ENCODE measurements at regions of chr1 and their contacts with region 1.

Region 1: GRCh38 chr1:19485362-19486187 is at the start of gene CAPZB:
- DNase-seq: peak; percentile 97
- H3K4me3 Mint-ChIP-seq: peak within 1 kb of the TSS; percentile 97
- H3K27ac Mint-ChIP-seq: peak within 1 kb of the TSS; percentile 95
- H3K4me1 Mint-ChIP-seq: peaks cover 52% of the 10 kb centered on the region
- H3K27me3 Mint-ChIP-seq: no peaks in the 10 kb centered on the region
- total RNA-seq, gene CAPZB: 291 and 297 TPM in 2 replicates

Region 2: DNA sequence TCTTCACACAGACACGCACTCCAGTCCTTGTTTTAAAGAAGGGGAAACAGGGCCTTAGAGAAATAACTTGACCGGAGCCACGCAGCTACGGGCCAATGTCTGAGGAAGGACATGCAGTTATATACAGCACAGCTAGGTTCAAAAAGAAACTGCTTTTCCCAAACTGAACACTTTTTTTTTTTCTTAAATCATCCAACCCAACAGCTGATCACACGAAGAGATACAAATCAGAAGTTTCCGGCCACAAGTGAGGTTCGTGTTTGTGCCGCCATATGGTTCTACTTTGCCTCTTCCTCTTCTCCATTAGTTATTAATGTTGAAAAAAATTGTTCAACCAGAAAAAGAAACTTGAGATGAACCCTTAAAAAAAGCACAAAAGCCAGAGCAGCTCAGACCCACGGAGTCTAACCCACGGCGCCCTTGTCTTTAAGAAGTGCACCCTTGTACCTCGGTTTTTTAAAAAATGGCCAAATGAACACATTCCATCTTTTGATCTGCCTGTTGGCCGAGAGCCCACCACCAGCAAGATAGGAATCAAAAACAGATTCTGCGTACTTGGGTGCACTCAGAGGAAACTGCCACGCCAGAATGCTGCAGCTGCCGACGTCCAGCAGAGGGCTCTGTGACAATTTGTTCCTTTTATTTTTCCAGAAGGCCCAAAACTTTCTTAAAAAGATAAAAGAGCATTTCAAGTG is 94.5 kb before region 1 on chr1:
- intact Hi-C with region 1: loop called (anchors 2 kb)
- DNase-seq: peak; percentile 88
- H3K4me3 Mint-ChIP-seq: peak overlapping the region; percentile 81
- H3K27ac Mint-ChIP-seq: peak overlapping the region; percentile 94
- H3K4me1 Mint-ChIP-seq: peaks cover 49% of the 10 kb centered on the region
- H3K27me3 Mint-ChIP-seq: no peaks in the 10 kb centered on the region

Region 3: GRCh38 chr1:19468397-19468956 is 17.1 kb before region 1 on chr1:
- intact Hi-C with region 1: loop called (anchors 1 kb)
- DNase-seq: peak; percentile 90
- H3K4me3 Mint-ChIP-seq: peak overlapping the region; percentile 78
- H3K27ac Mint-ChIP-seq: peak overlapping the region; percentile 92
- H3K4me1 Mint-ChIP-seq: peaks cover 82% of the 10 kb centered on the region
- H3K27me3 Mint-ChIP-seq: no peaks in the 10 kb centered on the region

Region 4: DNA sequence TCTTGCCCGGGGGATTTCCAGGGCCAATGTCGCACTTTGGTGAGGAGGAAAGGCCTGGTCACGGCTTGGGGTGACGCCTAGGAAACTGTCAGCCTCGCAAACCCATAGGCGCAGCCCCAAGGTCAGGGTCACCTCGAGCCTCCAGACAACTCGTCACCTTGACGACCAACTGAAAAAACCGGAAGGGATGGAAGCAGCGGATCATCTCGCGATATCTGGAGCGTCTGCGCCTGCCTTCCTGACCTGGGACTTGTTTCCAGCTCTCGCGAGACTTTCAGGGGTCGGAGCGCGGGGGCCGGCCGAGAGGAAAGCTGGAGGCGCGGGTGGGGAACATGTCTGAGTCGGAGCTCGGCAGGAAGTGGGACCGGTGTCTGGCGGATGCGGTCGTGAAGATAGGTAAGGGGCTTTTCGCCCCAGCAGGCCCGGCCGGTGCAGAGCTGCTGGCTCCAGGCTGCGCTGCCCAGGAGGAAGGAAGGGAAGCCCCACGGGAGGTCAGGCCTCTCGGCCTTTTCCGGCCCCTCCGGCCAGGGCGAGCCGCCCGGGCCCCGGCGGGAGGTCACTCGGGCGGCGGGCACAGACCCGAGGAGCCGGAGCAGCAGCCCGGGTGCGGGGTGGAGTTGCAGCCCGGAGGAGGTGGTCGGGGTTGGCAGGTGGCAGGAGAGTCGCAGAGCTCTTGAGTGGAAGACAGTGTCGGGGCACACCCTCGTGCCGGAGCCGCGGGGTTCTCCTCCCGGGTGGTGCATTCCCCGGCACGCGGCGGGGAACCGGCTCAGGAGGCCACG is 111.3 kb after region 1 on chr1:
- intact Hi-C with region 1: loop called (anchors 1 kb)
- DNase-seq: peak; percentile 99
- H3K4me3 Mint-ChIP-seq: peak overlapping the region; percentile 99
- H3K27ac Mint-ChIP-seq: peak overlapping the region; percentile 100
- H3K4me1 Mint-ChIP-seq: peaks cover 38% of the 10 kb centered on the region
- H3K27me3 Mint-ChIP-seq: peaks cover 6% of the 10 kb centered on the region